PC-9 (cell line): ENCODE measurements at regions of chr5 and their contacts with region 1.

Region 1: DNA sequence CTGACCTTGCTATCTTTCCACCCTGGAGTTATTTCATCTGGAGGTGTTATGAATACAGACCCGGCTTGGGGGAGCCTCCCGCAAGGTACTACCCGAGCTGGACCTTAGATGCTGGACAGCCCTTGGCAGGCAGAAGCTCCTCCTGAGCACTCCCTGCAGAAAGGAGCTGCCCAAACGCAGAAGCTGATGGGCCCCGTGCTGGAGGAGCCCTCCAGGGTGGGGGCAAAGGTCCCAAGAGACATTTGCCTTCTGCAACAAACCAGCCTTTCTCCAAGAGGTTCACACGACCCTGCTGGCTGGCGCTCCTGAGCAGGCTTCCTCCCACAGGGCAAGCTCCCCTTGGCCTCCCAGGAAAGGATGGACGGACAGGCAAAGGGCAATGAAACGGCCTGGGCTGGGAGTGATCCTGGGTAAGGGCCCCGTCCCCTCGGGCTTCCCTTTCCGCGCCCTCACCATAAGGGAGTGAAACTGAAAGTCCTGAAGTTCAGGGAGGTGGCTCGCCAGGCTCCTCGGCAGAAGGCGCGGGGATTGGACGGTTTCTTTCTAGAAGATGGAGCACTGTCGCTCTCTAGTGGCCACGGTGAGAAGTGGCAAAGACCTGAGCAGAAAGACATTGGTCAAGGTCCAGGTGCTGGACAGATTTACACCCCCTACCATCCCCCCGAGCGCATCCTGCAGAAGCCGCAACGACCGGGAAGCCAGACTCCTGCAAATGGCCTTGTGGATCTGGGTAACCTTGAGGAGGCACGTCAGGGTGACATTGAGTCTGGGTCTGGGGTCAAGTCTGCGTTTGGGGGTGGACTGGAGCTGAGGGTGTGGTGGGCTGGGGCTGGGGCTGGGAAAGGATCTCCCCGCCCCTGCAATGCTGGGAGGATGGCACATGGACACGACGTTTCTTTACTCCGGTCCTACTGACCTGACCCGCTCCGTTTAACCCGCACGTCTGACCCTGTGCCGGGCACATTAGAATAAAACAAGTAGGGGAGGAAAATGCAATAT is 56.4 kb downstream of the NEURL1B start:
- DNase-seq: peak; percentile 70 to 89
- H3K4me3 ChIP-seq: peak overlapping the region; percentile 64
- H3K27ac ChIP-seq: no peak overlapping the region
- H3K4me1 ChIP-seq: no peaks in the 10 kb centered on the region
- H3K27me3 ChIP-seq: peaks cover 15% of the 10 kb centered on the region
- CTCF ChIP-seq: peak; percentile 93

Region 2: DNA sequence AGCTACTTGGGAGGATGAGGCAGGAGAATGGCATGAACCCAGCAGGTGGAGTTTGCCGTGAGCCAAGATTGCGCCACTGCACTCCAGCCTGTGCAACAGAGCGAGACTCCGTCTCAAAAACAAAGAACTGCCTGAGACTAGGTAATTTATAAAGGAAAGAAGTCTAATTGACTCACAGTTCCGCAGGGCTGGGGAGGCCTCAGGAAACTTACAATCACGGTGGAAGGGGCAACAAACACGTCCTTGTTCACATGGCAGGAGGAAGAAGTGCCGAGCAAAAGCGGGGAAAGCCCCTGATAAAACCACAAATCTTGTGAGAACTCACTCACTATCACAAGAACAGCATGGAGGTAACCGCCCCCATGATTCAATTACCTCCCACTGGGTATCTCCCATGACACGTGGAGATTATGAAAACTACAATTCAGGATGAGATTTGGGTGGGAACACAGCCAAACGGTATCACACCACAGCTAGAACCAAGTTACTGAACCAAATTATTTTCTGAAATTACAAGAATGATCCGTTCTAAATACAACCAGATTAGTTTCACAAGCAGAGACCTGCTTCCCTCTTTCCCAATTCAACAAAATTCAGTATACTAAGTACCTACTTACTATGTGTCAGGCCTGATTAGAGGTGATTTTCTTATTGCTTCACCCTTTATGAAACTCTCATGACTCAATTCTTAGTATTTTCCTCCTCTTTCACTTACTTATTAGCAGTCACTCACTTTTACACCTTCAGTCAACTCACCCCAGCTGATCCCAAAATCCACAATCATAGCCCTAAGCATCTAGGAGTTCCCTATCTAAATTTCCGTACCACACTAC is 422.3 kb before region 1 on chr5:
- CTCF ChIA-PET with region 1: no interaction called
- POLR2A ChIA-PET with region 1: interaction called, 14 read pairs
- intact Hi-C with region 1: no loop called
- DNase-seq: peak in 1 of 2 experiments; percentile 62
- H3K4me3 ChIP-seq: no peak overlapping the region
- H3K27ac ChIP-seq: peak overlapping the region; percentile 80
- H3K4me1 ChIP-seq: peaks cover 34% of the 10 kb centered on the region
- H3K27me3 ChIP-seq: no peaks in the 10 kb centered on the region
- CTCF ChIP-seq: no peak

Region 3: DNA sequence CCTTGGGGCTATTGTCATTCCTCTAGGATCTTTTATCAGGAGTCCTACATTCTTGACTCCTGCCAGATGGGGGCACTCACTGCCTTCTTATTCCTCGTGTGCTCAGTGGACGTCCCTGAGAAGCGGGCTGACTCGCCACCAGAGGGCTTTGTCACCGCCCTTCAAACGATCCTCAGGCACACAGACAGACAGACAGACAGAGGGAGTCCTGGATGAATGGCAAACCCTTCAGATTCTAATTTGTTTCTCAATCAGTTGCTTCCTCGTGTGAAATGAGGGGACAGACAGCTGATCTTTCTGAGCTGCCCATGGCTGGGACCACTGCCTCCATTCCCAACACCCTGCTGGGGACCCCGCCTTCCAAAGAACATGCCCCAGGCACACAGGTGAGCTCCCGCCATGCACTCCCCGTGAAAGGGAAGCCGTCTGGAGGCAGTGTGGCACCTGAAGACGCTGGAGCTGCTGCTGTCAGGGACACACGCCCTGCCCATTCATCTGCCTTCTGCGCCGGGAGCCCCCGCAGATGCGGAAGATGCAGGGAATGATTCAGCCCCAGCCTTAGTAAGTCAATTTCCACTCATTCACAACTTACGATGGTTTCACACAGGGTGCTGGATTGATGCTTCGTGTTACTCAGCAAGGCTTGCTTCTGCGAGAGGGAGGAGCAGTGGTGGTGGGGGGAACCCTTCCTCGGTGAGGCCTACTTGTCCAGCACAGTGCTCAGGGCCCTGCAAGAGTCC is 218.2 kb before region 1 on chr5:
- CTCF ChIA-PET with region 1: interaction called, 8 read pairs
- POLR2A ChIA-PET with region 1: no interaction called
- intact Hi-C with region 1: loop called (anchors 1 kb)
- DNase-seq: peak; percentile 74 to 77
- H3K4me3 ChIP-seq: no peak overlapping the region
- H3K27ac ChIP-seq: no peak overlapping the region
- H3K4me1 ChIP-seq: no peaks in the 10 kb centered on the region
- H3K27me3 ChIP-seq: no peaks in the 10 kb centered on the region
- CTCF ChIP-seq: peak; percentile 86

Region 4: GRCh38 chr5:172666251-172666650 is 31.2 kb before region 1 on chr5:
- CTCF ChIA-PET with region 1: interaction called, 10 read pairs
- POLR2A ChIA-PET with region 1: no interaction called
- intact Hi-C with region 1: loop called (anchors 1 kb)
- DNase-seq: peak in 1 of 2 experiments; percentile 25
- H3K4me3 ChIP-seq: no peak overlapping the region
- H3K27ac ChIP-seq: no peak overlapping the region
- H3K4me1 ChIP-seq: no peaks in the 10 kb centered on the region
- H3K27me3 ChIP-seq: no peaks in the 10 kb centered on the region
- CTCF ChIP-seq: no peak; the same call in 1 of the 2 replicates

Region 5: GRCh38 chr5:172786736-172787462 is 89.5 kb after region 1 on chr5:
- CTCF ChIA-PET with region 1: no interaction called
- POLR2A ChIA-PET with region 1: no interaction called
- intact Hi-C with region 1: no loop called
- DNase-seq: no peak
- H3K4me3 ChIP-seq: no peak overlapping the region
- H3K27ac ChIP-seq: no peak overlapping the region
- H3K4me1 ChIP-seq: peaks cover 37% of the 10 kb centered on the region
- H3K27me3 ChIP-seq: no peaks in the 10 kb centered on the region
- CTCF ChIP-seq: no peak